GM12878 (cell line): ENCODE measurements at regions of chr22 and their contacts with region 1.

Region 1: DNA sequence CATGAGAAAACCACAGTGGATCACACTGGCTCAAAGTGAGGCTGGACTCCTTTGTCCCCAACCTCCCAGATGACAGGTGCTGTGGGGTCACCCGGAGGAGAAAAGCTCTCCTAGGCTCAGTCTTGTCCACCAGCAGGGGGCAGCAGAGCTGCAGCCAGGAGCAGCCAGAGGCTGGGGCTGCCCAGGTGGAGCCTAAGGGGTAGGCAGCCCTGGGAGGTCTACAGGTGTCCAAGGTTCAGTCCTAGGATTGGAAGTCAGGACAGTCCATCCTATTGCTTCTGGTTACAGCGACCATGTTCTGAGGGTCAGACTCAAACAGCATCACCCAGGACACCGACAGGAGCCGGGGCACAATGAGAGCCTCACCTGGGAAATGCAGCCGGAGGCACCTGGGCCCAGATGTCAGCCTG is 77.6 kb upstream of the IGLL5 start:
- DNase-seq: no peak
- ATAC-seq: peak; percentile 97
- H3K4me3 ChIP-seq: no peak overlapping the region
- H3K27ac ChIP-seq: no peak overlapping the region
- H3K4me1 ChIP-seq: no peaks in the 10 kb centered on the region; the same call in 1 of the 2 replicates
- H3K27me3 ChIP-seq: no peaks in the 10 kb centered on the region
- CTCF ChIP-seq: peak; percentile 40 to 82 (median 67); a peak in 5 of 6 replicates
- EP300 ChIP-seq: no peak
- POLR2A ChIP-seq: no peak
- RAD21 ChIP-seq: no peak

Region 2: GRCh38 chr22:22753526-22754267 is 56.3 kb before region 1 on chr22:
- CTCF ChIA-PET with region 1: interaction called, 11 read pairs
- POLR2A ChIA-PET with region 1: no interaction called
- RAD21 ChIA-PET with region 1: interaction called, 10 read pairs
- SMC1A ChIA-PET with region 1: interaction called, 7 read pairs
- in situ Hi-C with region 1: no loop called
- intact Hi-C with region 1: no loop called
- DNase-seq: no peak
- ATAC-seq: peak; percentile 98
- H3K4me3 ChIP-seq: no peak overlapping the region
- H3K27ac ChIP-seq: no peak overlapping the region
- H3K4me1 ChIP-seq: no peaks in the 10 kb centered on the region
- H3K27me3 ChIP-seq: no peaks in the 10 kb centered on the region
- CTCF ChIP-seq: peak; percentile 38 to 76 (median 67); a peak in 5 of 6 replicates
- EP300 ChIP-seq: no peak
- POLR2A ChIP-seq: no peak
- RAD21 ChIP-seq: no peak

Region 3: GRCh38 chr22:22838148-22838786 is 28.2 kb after region 1 on chr22:
- CTCF ChIA-PET with region 1: interaction called, 3 read pairs
- POLR2A ChIA-PET with region 1: no interaction called
- RAD21 ChIA-PET with region 1: interaction called, 4 read pairs
- SMC1A ChIA-PET with region 1: interaction called, 11 read pairs
- in situ Hi-C with region 1: no loop called
- intact Hi-C with region 1: no loop called
- DNase-seq: no peak
- ATAC-seq: no peak
- H3K4me3 ChIP-seq: no peak overlapping the region
- H3K27ac ChIP-seq: no peak overlapping the region
- H3K4me1 ChIP-seq: no peaks in the 10 kb centered on the region; the same call in 1 of the 2 replicates
- H3K27me3 ChIP-seq: no peaks in the 10 kb centered on the region
- CTCF ChIP-seq: no peak
- EP300 ChIP-seq: no peak
- POLR2A ChIP-seq: no peak
- RAD21 ChIP-seq: no peak

Region 4: DNA sequence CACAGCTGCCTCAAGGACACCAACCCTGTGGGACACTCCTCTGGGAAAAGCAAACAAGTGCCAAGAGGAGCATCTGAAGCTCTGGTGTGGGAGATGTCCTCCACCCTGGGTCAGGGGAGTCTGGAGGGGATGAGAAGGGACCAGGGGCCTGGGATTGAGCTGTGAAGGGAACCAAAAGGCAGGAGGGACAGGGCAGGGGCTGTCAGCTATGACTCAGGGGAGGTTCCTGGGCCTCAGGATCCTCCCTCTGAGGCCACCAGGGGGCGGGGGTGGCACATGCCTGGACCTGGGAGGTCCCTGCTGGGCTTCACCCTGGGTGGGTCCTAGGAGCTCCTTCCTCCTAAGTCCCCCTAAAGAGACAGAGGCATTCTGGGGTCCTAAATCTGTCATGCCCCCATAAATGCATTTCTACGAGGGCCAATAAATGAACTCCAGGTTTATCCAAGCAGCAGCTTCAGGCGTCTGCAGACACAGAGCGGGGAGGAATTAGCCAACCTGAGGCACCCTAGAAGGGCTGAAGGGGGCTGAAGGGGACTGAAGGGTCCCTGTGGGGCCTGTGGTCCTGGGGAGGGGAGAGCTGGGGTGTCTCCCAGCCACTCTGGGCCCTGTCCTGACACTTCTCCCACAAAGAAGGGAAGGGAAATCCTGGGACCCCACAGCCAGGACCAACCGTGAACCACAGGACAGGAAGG is 45.7 kb after region 1 on chr22:
- CTCF ChIA-PET with region 1: interaction called, 158 read pairs
- POLR2A ChIA-PET with region 1: no interaction called
- RAD21 ChIA-PET with region 1: interaction called, 40 read pairs
- SMC1A ChIA-PET with region 1: interaction called, 83 read pairs
- in situ Hi-C with region 1: no loop called
- intact Hi-C with region 1: no loop called
- DNase-seq: no peak
- ATAC-seq: peak; percentile 95
- H3K4me3 ChIP-seq: no peak overlapping the region
- H3K27ac ChIP-seq: peak overlapping the region; percentile 73
- H3K4me1 ChIP-seq: no peaks in the 10 kb centered on the region
- H3K27me3 ChIP-seq: no peaks in the 10 kb centered on the region
- CTCF ChIP-seq: peak; percentile 27 to 70 (median 60); a peak in 5 of 6 replicates
- EP300 ChIP-seq: no peak
- POLR2A ChIP-seq: no peak
- RAD21 ChIP-seq: no peak

Region 5: GRCh38 chr22:22893077-22893805 is 83.2 kb after region 1 on chr22:
- CTCF ChIA-PET with region 1: no interaction called
- POLR2A ChIA-PET with region 1: no interaction called
- RAD21 ChIA-PET with region 1: no interaction called
- SMC1A ChIA-PET with region 1: no interaction called
- in situ Hi-C with region 1: no loop called
- intact Hi-C with region 1: no loop called
- DNase-seq: no peak
- ATAC-seq: no peak
- H3K4me3 ChIP-seq: no peak overlapping the region
- H3K27ac ChIP-seq: no peak overlapping the region
- H3K4me1 ChIP-seq: no peaks in the 10 kb centered on the region
- H3K27me3 ChIP-seq: no peaks in the 10 kb centered on the region
- CTCF ChIP-seq: no peak
- EP300 ChIP-seq: no peak
- POLR2A ChIP-seq: no peak
- RAD21 ChIP-seq: no peak

Region 6: GRCh38 chr22:22935546-22936157 is 125.6 kb after region 1 on chr22:
- CTCF ChIA-PET with region 1: interaction called, 22 read pairs
- POLR2A ChIA-PET with region 1: no interaction called
- RAD21 ChIA-PET with region 1: interaction called, 22 read pairs
- SMC1A ChIA-PET with region 1: interaction called, 29 read pairs
- in situ Hi-C with region 1: no loop called
- intact Hi-C with region 1: no loop called
- DNase-seq: peak; percentile 99
- ATAC-seq: peak; percentile 84
- H3K4me3 ChIP-seq: peak overlapping the region; percentile 24; the same call in 1 of the 2 replicates
- H3K27ac ChIP-seq: peak overlapping the region; percentile 99
- H3K4me1 ChIP-seq: peaks cover 92% of the 10 kb centered on the region
- H3K27me3 ChIP-seq: no peaks in the 10 kb centered on the region
- CTCF ChIP-seq: peak; percentile 53 to 83 (median 71)
- EP300 ChIP-seq: peak; percentile 100
- POLR2A ChIP-seq: no peak; the same call in 1 of the 2 replicates
- RAD21 ChIP-seq: peak; percentile 75

Region 7: DNA sequence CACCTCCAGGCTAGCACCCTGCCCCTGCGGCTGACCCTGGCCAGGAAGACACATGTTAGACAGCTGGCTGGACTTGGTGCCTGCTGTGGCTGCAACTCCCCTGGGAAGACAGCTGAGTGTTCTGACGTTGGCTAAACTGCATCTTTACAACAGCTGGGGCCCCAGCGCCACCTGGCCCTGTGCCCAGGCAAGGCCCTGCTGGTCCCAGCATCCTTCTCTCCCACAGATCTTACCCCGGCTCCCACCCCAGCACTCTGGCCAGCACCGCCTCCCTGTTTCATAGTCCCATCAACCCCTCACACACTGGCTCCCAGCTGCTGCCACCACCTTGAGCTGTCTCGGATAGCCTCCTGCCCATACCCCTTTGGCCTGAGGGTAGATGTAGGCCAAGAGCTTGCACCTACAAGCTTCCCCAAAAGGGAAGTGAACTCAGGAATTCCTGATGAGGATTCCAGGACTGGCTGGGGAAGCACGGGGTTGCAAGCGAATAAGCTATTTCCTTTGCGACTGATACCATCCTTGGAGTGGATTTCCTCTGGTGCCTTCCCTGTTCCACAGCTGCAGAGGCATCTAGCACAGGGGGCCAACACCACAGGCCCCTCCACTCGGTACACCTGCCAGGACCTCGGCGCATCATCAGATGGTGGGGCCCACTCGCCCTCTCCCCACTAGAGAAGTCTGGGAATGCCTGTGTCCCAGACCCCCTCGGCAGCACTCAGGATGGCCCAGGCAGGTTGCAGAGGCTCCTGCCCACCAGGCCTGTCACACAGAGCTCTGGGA is 303.2 kb after region 1 on chr22:
- CTCF ChIA-PET with region 1: no interaction called
- POLR2A ChIA-PET with region 1: no interaction called
- RAD21 ChIA-PET with region 1: no interaction called
- SMC1A ChIA-PET with region 1: no interaction called
- in situ Hi-C with region 1: no loop called
- intact Hi-C with region 1: no loop called
- DNase-seq: no peak
- ATAC-seq: peak; percentile 58
- H3K4me3 ChIP-seq: no peak overlapping the region
- H3K27ac ChIP-seq: no peak overlapping the region
- H3K4me1 ChIP-seq: no peaks in the 10 kb centered on the region
- H3K27me3 ChIP-seq: no peaks in the 10 kb centered on the region
- CTCF ChIP-seq: no peak
- EP300 ChIP-seq: no peak
- POLR2A ChIP-seq: no peak
- RAD21 ChIP-seq: no peak

Region 8: DNA sequence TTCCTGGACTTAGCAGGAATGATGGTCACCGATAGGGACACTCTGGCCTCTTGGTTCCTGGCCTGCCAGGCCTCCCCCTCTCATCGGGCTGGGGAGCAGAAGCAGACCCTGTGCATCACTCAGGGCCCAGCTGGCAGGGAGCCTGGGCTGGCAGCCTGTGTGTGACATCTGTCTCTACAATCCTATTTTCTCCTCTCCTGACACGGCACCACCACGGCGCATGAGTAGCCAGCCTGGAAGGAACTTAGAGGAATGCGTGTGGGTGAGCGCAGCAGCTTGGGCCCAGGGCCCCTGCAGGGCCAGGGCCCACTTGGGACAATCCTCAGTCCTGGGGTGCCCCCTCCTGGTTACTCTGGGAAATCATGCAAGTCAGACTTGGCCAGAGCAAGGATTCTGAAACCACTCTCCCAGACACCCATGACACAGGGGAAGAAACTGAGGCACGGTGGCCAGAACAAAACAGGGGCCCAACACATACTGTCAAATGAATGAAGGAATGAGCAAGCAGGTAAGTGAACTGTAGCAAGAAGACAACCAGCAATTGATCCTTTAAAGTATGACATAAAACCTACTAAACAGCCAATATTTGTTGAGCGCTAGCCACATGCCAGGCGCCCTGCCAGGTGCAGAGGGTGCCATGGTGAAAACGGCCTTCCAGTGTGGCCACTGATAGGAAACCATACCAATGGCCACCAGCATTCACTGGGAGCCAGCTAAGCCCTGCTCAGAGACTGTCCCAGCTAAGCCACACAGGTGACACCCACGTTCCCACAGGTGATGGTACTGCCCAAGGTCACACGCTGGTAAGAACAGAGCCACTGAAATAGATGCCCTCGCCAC is 318.5 kb after region 1 on chr22:
- CTCF ChIA-PET with region 1: no interaction called
- POLR2A ChIA-PET with region 1: no interaction called
- RAD21 ChIA-PET with region 1: interaction called, 3 read pairs
- SMC1A ChIA-PET with region 1: interaction called, 3 read pairs
- in situ Hi-C with region 1: no loop called
- intact Hi-C with region 1: loop called (anchors 10 kb)
- DNase-seq: no peak
- ATAC-seq: peak; percentile 97
- H3K4me3 ChIP-seq: no peak overlapping the region
- H3K27ac ChIP-seq: no peak overlapping the region
- H3K4me1 ChIP-seq: no peaks in the 10 kb centered on the region
- H3K27me3 ChIP-seq: no peaks in the 10 kb centered on the region
- CTCF ChIP-seq: peak; percentile 80 to 90 (median 82)
- EP300 ChIP-seq: no peak
- POLR2A ChIP-seq: no peak
- RAD21 ChIP-seq: peak; percentile 95

Region 9: GRCh38 chr22:23385291-23386244 is 575.5 kb after region 1 on chr22:
- CTCF ChIA-PET with region 1: no interaction called
- POLR2A ChIA-PET with region 1: no interaction called
- RAD21 ChIA-PET with region 1: no interaction called
- SMC1A ChIA-PET with region 1: no interaction called
- in situ Hi-C with region 1: loop called (anchors 25 kb)
- intact Hi-C with region 1: no loop called
- DNase-seq: peak; percentile 36
- ATAC-seq: peak; percentile 97
- H3K4me3 ChIP-seq: no peak overlapping the region
- H3K27ac ChIP-seq: no peak overlapping the region
- H3K4me1 ChIP-seq: no peaks in the 10 kb centered on the region
- H3K27me3 ChIP-seq: no peaks in the 10 kb centered on the region
- CTCF ChIP-seq: peak; percentile 95 to 97 (median 97); a peak in 5 of 6 replicates
- EP300 ChIP-seq: no peak
- POLR2A ChIP-seq: no peak
- RAD21 ChIP-seq: peak; percentile 96